Activated CD4-positive, alpha-beta T cell treated with anti-CD3 and anti-CD28 coated beads for 36 hours (primary cell): ENCODE measurements at regions of chr2 and their contacts with region 1.

Region 1: GRCh38 chr2:136362676-136363390 is 244.9 kb upstream of the CXCR4 start:
- DNase-seq: peak; percentile 65
- ATAC-seq: peak; percentile 82
- H3K4me3 Mint-ChIP-seq: no peak overlapping the region
- H3K27ac Mint-ChIP-seq: peak overlapping the region; percentile 63
- H3K4me1 Mint-ChIP-seq: peaks cover 54% of the 10 kb centered on the region
- H3K27me3 Mint-ChIP-seq: peaks cover 12% of the 10 kb centered on the region

Region 2: DNA sequence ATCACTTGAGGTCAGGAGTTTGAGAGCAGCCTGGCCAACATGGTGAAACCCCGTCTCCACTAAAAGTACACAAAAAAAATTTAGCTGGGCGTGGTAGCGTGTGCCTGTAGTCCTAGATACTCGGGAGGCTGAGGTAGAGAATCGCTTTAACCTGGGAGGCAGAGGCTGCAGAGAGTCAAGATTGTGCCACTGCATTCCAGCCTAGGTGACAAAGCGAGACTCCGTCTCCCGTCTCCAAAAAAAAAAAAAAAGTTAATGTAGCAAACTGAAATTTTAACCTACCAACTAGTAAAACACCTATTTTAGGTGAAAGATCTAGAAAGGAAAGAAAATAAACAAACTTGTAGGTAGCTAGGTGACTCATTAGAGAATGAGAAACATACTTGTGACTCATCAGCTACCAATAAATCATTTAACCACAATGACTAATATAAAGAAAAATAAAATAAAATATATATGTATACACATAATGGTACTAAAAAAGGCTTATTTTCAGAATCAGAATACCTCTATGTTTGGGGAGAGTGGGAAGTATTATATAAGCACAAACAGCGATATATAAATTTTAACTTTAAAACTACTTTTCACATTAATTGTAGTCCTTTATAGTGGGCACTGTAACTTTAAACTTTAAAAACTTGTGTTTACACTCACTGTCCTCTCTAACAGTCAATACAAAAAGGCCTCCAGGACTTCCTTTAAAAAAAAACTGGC is 414.0 kb before region 1 on chr2:
- CTCF ChIA-PET with region 1: no interaction called
- POLR2A ChIA-PET with region 1: no interaction called
- intact Hi-C with region 1: loop called in 1 of 2 experiments (anchors 1 kb)
- DNase-seq: no peak
- ATAC-seq: peak; percentile 81
- H3K4me3 Mint-ChIP-seq: peak overlapping the region; percentile 39
- H3K27ac Mint-ChIP-seq: peak overlapping the region; percentile 84
- H3K4me1 Mint-ChIP-seq: peaks cover 55% of the 10 kb centered on the region
- H3K27me3 Mint-ChIP-seq: no peaks in the 10 kb centered on the region

Region 3: DNA sequence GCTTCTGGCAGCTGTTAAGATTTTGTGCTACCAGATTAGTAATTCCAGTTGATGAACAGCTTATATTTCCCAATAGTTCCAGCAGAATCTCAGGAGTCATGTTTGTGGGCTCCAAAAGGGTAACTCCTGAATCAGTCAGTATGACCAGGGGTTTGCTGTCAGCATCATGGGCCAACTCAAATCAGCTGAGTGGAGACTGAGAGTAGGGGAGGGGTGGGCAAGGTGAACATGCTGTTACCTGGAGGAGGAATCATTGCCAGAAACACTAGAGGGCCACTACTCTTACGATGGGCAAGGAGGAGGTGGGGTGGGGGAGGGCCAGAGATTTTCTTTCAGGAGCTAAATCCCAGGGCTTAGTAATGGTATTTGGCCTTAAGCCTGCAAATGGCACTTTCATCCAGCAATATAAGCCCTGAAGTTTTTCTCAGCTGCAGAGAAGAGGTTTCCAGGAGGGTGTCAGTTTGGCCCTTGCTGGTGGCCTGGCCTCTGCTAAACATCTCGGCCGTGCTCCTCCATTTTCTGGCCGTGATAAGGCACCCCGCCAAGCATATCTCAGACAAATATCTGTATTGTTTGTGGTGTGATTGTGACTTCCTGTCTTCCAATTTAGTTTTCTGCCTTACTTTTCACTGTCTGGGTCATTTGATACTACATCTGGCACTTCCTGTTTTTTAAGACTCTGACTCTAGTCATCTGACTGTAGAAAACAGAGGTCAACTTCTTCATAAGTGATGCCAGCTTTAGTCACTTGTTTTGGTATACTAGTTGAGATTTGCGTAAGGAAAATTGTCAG is 124.4 kb before region 1 on chr2:
- CTCF ChIA-PET with region 1: no interaction called
- POLR2A ChIA-PET with region 1: no interaction called
- intact Hi-C with region 1: loop called (anchors 2 kb)
- DNase-seq: peak; percentile 44
- ATAC-seq: peak; percentile 82
- H3K4me3 Mint-ChIP-seq: peak overlapping the region; percentile 15
- H3K27ac Mint-ChIP-seq: peak overlapping the region; percentile 93
- H3K4me1 Mint-ChIP-seq: peaks cover 43% of the 10 kb centered on the region
- H3K27me3 Mint-ChIP-seq: no peaks in the 10 kb centered on the region

Region 4: GRCh38 chr2:136310797-136311603 is 51.8 kb before region 1 on chr2:
- CTCF ChIA-PET with region 1: interaction called, 3 read pairs
- POLR2A ChIA-PET with region 1: interaction called, 4 read pairs
- intact Hi-C with region 1: loop called (anchors 1 kb)
- DNase-seq: peak; percentile 50
- ATAC-seq: peak; percentile 78
- H3K4me3 Mint-ChIP-seq: no peak overlapping the region
- H3K27ac Mint-ChIP-seq: peak overlapping the region; percentile 86
- H3K4me1 Mint-ChIP-seq: peaks cover 36% of the 10 kb centered on the region
- H3K27me3 Mint-ChIP-seq: peaks cover 4% of the 10 kb centered on the region

Region 5: GRCh38 chr2:136378712-136379595 is 16.1 kb after region 1 on chr2:
- CTCF ChIA-PET with region 1: interaction called, 10 read pairs
- POLR2A ChIA-PET with region 1: interaction called, 8 read pairs
- intact Hi-C with region 1: loop called (anchors 1 to 2 kb)
- DNase-seq: peak; percentile 87
- ATAC-seq: peak; percentile 11
- H3K4me3 Mint-ChIP-seq: no peak overlapping the region
- H3K27ac Mint-ChIP-seq: no peak overlapping the region
- H3K4me1 Mint-ChIP-seq: peaks cover 82% of the 10 kb centered on the region
- H3K27me3 Mint-ChIP-seq: no peaks in the 10 kb centered on the region